Common myeloid progenitor, CD34-positive (primary cell): ENCODE measurements at regions of chr2 and their contacts with region 1.

Region 1: DNA sequence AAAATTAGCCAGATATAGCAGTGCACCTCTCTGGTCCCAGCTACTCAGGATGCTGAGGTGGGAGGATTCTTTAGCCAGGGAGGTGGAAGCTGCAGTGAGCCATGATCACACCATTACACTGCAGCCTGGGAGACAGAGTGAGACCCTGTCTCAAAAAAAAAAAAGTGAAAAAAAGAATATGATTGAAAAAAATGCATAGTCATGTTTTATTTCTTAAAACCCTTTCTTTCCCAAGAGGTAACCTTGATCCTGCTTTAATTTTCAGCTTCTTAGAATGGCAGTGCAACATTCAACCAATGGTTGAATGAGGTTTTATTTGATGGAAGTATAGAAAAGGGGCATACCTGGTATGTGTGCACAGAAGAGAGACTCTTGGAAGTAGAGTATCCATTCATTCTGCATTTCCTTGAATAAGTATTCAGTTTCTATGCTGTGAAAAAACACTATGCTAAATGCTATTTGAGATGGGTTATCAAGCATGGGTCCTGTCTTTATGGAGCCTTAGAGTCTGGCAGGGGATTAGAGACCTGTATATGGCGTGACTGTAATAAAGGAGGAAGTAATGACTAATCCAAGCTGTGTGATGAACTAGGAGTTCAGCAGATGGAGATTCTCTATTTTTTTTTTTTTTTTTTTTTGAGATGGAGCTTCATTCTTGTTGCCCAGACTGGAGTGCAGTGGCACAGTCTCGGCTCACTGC is 146.3 kb downstream of the WDSUB1 start:
- DNase-seq: peak; percentile 36 to 87 (median 77)
- H3K4me3 ChIP-seq: no peak overlapping the region
- H3K27ac ChIP-seq: no peak overlapping the region
- H3K4me1 ChIP-seq: peaks cover 1 to 13% (median 5%) of the 10 kb centered on the region in 4 experiments
- H3K27me3 ChIP-seq: no peaks in the 10 kb centered on the region

Region 2: GRCh38 chr2:159153463-159153862 is 13.2 kb after region 1 on chr2:
- CTCF ChIA-PET with region 1: interaction called, 17 read pairs
- POLR2A ChIA-PET with region 1: interaction called, 4 read pairs
- DNase-seq: no peak
- H3K4me3 ChIP-seq: no peak overlapping the region
- H3K27ac ChIP-seq: no peak overlapping the region
- H3K4me1 ChIP-seq: peaks cover 34 to 63% (median 43%) of the 10 kb centered on the region in 4 experiments
- H3K27me3 ChIP-seq: no peaks in the 10 kb centered on the region